ENCODE measurements at regions of chr19 and their contacts with region 1.

Region 1: GRCh38 chr19:3324321-3324856 is 42.0 kb upstream of the NFIC start:
- DNase-seq: peak; percentile 88

Region 2: DNA sequence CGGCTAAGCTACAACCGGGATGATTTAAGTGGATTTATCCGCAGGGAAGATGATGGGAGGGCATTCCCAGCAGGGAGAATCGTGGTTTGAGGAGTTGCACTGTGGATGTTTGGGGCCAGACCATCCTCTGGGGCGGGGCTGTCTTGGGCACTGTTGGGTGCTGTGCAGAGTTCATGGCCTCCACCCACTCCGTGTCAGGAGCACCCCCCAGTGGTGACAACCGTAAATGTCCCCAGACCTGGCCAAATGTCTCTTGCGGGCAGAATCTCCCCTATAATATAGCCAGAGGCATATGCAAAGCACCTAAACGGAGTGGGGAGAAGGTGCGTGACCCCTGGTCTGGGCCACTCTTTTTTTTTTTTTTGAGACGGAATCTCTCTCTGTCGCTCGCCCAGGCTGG is 115.7 kb after region 1 on chr19:
- intact Hi-C with region 1: no loop called
- DNase-seq: no peak

Region 3: GRCh38 chr19:3471954-3472655 is 147.7 kb after region 1 on chr19:
- intact Hi-C with region 1: loop called (anchors 2 to 5 kb)
- DNase-seq: no peak

Region 4: GRCh38 chr19:3479177-3479833 is 154.9 kb after region 1 on chr19:
- intact Hi-C with region 1: loop called in 1 of 2 experiments (anchors 5 kb)
- DNase-seq: no peak